H1 (cell line): ENCODE measurements at regions of chr3 and their contacts with region 1.

Region 1: GRCh38 chr3:48400824-48401433 is 28.9 kb downstream of the FBXW12 start:
- DNase-seq: peak; percentile 21 to 51
- H3K4me3 ChIP-seq: no peak overlapping the region
- H3K27ac ChIP-seq: no peak overlapping the region
- H3K4me1 ChIP-seq: peaks cover 0 to 7% (median 4%) of the 10 kb centered on the region in 4 experiments; a peak in 3 of 7 replicates
- H3K27me3 ChIP-seq: no peaks in the 10 kb centered on the region
- CTCF ChIP-seq: peak in 2 of 3 experiments; percentile 87 to 93; a peak in 3 of 4 replicates
- EP300 ChIP-seq: no peak
- POLR2A ChIP-seq: no peak
- RAD21 ChIP-seq: peak; percentile 88 to 91

Region 2: GRCh38 chr3:48130321-48130904 is 270.5 kb before region 1 on chr3:
- CTCF ChIA-PET with region 1: no interaction called
- POLR2A ChIA-PET with region 1: no interaction called
- DNase-seq: no peak
- H3K4me3 ChIP-seq: no peak overlapping the region
- H3K27ac ChIP-seq: no peak overlapping the region
- H3K4me1 ChIP-seq: peaks cover 0 to 5% (median under 1%) of the 10 kb centered on the region in 4 experiments; a peak in 3 of 7 replicates
- H3K27me3 ChIP-seq: no peaks in the 10 kb centered on the region
- CTCF ChIP-seq: no peak
- EP300 ChIP-seq: no peak
- POLR2A ChIP-seq: no peak
- RAD21 ChIP-seq: no peak

Region 3: DNA sequence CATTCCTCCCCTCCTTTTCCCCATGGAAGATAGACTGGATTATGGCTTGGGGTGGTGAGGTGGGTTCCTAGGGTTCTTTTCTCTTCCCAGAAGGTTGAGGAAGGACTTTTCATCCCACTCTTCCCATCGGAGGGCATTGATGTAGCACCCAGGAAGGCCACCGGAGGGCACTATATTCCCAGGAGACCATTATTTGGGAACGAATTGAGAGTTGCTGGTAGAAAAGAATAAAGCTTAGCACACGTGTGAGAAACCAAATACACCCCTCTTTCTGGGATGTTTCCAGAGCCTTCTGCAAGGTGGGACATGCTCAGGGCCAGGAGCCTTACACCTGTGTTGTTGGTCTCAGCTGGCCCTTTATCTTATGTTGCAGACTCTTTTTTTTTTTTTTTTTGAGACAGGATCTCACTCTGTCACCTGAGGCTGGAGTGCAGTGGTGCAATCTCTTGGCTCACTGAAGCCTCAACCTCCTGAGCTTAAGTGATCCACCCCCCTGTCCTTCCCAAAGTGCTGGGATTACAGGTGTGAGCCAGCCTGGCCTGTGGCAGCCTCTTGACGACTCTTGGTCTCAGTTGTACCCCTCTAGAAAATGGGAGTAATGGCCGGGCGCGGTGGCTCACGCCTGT is 206.4 kb before region 1 on chr3:
- CTCF ChIA-PET with region 1: interaction called, 14 read pairs
- POLR2A ChIA-PET with region 1: interaction called, 5 read pairs
- DNase-seq: peak; percentile 23 to 95
- H3K4me3 ChIP-seq: no peak overlapping the region
- H3K27ac ChIP-seq: no peak overlapping the region
- H3K4me1 ChIP-seq: peaks cover 2 to 11% (median 5%) of the 10 kb centered on the region in 4 experiments
- H3K27me3 ChIP-seq: no peaks in the 10 kb centered on the region
- CTCF ChIP-seq: peak; percentile 67 to 91 (median 78)
- EP300 ChIP-seq: no peak
- POLR2A ChIP-seq: no peak
- RAD21 ChIP-seq: peak; percentile 91 to 93

Region 4: DNA sequence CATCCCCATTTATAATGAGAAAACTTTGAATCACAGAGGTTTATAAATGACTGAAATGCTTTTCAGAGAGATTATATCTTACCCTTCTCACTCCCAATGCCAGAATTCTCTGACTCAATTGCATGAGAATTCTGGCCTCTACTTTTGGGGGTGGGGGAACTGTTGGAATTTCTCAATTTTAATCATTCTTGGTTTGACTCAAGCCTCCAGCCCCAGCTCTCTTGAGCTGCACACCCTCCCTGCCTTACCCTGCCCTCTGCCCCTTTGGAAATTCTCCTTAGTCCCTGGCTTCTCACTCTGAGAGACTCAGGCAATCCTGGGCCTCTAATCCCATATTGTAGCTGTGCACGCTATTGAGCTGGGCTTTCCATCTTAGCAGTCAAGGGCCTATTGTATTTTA is 115.8 kb before region 1 on chr3:
- CTCF ChIA-PET with region 1: interaction called, 12 read pairs
- POLR2A ChIA-PET with region 1: interaction called, 4 read pairs
- DNase-seq: no peak
- H3K4me3 ChIP-seq: no peak overlapping the region
- H3K27ac ChIP-seq: no peak overlapping the region
- H3K4me1 ChIP-seq: no peaks in the 10 kb centered on the region
- H3K27me3 ChIP-seq: no peaks in the 10 kb centered on the region; a peak in 1 of 7 replicates
- CTCF ChIP-seq: no peak
- EP300 ChIP-seq: no peak
- POLR2A ChIP-seq: no peak
- RAD21 ChIP-seq: no peak

Region 5: GRCh38 chr3:48338635-48339034 is 62.3 kb before region 1 on chr3:
- CTCF ChIA-PET with region 1: no interaction called
- POLR2A ChIA-PET with region 1: no interaction called
- DNase-seq: no peak
- H3K4me3 ChIP-seq: no peak overlapping the region
- H3K27ac ChIP-seq: no peak overlapping the region
- H3K4me1 ChIP-seq: no peaks in the 10 kb centered on the region
- H3K27me3 ChIP-seq: no peaks in the 10 kb centered on the region; a peak in 1 of 7 replicates
- CTCF ChIP-seq: no peak
- EP300 ChIP-seq: no peak
- POLR2A ChIP-seq: no peak
- RAD21 ChIP-seq: no peak

Region 6: GRCh38 chr3:48415554-48415953 is 14.6 kb after region 1 on chr3:
- CTCF ChIA-PET with region 1: interaction called, 95 read pairs
- POLR2A ChIA-PET with region 1: interaction called, 650 read pairs
- DNase-seq: no peak
- H3K4me3 ChIP-seq: no peak overlapping the region
- H3K27ac ChIP-seq: no peak overlapping the region
- H3K4me1 ChIP-seq: no peaks in the 10 kb centered on the region
- H3K27me3 ChIP-seq: no peaks in the 10 kb centered on the region
- CTCF ChIP-seq: peak in 2 of 3 experiments; percentile 43 to 50; a peak in 3 of 4 replicates
- EP300 ChIP-seq: no peak
- POLR2A ChIP-seq: no peak
- RAD21 ChIP-seq: peak; percentile 17 to 49; a peak in 3 of 4 replicates

Region 7: GRCh38 chr3:48446425-48447193 is 45.7 kb after region 1 on chr3 and contains the start of gene ATRIP:
- CTCF ChIA-PET with region 1: interaction called, 17 read pairs
- POLR2A ChIA-PET with region 1: interaction called, 4 read pairs
- DNase-seq: peak in 1 of 2 experiments; percentile 95
- H3K4me3 ChIP-seq: peak within 1 kb of the TSS; percentile 80 to 98 (median 96)
- H3K27ac ChIP-seq: peak within 1 kb of the TSS; percentile 66
- H3K4me1 ChIP-seq: peaks cover 3 to 15% (median 6%) of the 10 kb centered on the region in 4 experiments; a peak in 5 of 7 replicates
- H3K27me3 ChIP-seq: no peaks in the 10 kb centered on the region
- CTCF ChIP-seq: no peak
- EP300 ChIP-seq: peak in 1 of 2 experiments; percentile 35; a peak in 1 of 3 replicates
- POLR2A ChIP-seq: peak; percentile 81 to 97
- RAD21 ChIP-seq: no peak
- total RNA-seq, gene ATRIP: 16.7 and 20.2 TPM in 2 replicates